HEK293T (cell line): ENCODE measurements at regions of chr15 and their contacts with region 1.

Region 1: DNA sequence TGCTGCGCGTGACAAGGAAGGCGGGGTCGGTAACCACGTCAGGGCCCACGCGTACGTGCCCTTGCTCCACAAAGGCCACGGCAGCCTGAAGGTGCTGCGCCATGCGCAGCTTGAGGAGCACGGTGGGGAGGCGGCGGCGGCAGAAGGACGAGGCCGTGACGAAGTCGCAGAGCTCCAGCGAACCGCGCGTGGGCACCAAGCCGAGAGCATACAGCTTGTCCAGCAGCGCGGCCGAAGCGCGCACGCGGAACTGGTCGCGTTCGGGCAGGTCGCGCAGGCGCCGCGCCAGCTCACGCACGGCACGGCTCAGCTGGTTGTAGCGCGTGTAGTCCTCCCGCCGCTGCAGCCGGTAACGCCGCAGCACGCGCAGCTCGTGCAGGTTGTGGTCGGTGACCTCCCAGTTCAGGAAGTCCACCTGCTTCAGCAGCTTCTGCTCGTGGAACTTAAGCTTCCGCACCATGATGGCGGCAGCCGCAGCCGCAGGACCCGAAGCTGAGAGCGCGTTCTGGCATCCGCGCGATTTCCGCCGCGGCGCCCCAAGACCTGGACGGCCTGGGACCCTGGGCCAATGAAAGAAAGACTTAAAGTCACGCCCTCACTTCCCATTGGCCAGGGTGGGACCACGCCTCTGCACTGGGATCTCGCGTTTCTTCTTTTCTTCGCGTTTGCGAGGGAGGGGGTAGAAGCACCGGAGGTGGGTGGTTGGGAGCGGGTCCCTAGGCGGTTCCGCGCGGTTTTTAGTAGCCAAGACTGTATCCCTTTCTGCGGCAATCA is at the start of gene IMP3:
- DNase-seq: peak; percentile 96

Region 2: DNA sequence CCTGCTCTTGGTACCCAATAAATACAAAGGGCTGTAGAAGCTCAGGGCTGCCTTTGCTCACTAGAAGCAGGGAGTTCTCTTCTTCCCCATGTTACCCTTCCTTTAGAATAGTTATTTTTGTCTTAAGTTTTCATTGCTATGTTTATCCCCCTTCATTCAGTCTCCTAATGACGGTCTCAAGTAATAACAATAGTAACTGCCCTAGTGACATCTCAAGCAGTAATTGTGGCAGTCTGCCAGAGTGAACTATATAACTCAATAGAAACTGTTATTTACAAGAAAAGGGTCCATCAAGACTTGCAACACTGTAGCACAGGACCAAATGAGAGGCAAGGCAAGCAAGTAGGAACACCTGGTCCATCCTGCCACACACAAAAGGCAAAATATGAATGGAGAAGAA is 155.9 kb before region 1 on chr15:
- CTCF ChIA-PET with region 1: no interaction called
- POLR2A ChIA-PET with region 1: no interaction called
- DNase-seq: no peak

Region 3: GRCh38 chr15:75578948-75579920 is 60.7 kb before region 1 on chr15 and contains the start of gene PTPN9:
- CTCF ChIA-PET with region 1: no interaction called
- POLR2A ChIA-PET with region 1: interaction called, 15 read pairs
- DNase-seq: peak; percentile 85

Region 4: GRCh38 chr15:75590239-75590638 is 49.7 kb before region 1 on chr15:
- CTCF ChIA-PET with region 1: no interaction called
- POLR2A ChIA-PET with region 1: no interaction called
- DNase-seq: no peak

Region 5: DNA sequence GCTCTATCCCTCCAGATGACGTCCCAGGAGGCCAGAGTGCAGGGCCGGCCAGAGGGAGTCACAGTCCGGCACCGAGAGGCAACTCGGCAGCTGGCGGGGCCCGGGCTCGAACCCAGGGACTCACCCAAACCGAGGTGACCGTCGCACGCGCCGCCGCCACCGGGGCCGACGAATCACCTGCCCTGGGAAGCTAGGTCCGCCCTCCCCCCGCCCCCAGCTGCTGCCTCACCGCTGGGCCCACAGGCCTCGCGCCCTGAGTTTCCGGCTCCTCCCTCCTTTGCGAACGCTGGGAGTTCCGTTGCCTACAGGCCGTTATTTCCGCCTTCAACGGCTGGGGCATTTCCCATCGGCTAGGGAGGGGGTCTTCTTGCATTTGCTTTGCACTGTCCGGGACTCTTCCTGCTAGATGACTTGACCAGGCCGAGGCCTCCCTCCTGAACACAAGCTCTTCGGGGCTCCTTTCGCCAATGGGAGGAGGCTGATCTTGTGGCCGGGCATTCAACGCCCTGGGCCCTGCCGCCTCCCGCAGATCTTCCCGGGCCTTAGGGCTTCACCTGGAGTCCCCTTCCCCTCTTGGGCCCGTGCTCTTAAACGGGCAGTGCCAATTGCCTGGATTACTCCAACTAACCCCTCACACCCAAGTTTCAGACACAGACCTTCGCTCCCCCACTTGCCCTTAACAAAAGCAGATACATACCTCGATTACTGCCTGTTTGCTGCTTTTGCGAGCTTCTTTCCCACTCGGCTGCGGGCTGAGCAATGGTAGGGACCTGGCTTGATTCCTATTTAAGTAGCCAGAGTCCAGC is 14.2 kb before region 1 on chr15 and contains the start of gene SNUPN:
- CTCF ChIA-PET with region 1: interaction called, 8 read pairs
- POLR2A ChIA-PET with region 1: interaction called, 93 read pairs
- DNase-seq: peak; percentile 98

Region 6: DNA sequence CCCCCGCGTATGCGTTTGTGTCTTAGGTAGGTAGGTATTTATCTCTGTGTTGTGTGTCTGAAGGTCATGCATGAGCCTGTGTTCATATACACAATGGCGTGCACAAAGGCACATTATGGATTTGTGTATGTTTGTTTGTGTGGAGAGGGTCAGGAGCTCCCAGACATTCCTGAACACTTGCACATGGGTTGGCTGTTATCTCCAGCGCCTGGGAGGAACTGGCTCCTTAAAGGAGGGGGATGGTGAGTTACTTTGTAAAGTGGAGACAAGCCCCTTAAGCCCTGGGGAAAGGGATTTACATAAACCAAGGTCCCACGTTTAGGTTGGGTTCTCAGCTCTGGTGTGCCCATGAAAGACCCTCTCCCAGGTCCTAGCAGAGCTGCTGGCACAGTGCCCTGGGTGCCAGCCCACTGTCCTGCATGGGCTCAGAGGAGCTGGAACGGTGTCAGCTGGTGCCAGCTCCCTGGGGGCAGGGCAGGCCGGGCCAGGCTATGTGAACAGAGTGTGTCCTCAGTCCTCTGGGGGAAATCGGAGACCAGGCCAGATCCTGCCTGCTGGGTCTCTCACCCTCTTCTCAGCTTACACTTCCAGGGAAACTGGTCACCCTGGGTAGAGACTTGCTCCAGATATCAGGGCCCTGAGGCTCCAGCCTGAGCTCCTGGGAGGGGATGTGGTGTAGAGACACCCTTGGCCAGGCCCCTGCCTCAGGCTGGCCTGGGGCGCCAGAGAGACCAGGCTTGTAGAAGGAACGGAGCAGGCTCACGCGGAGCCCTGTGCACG is 32.9 kb after region 1 on chr15:
- CTCF ChIA-PET with region 1: no interaction called
- POLR2A ChIA-PET with region 1: interaction called, 19 read pairs
- DNase-seq: no peak

Region 7: DNA sequence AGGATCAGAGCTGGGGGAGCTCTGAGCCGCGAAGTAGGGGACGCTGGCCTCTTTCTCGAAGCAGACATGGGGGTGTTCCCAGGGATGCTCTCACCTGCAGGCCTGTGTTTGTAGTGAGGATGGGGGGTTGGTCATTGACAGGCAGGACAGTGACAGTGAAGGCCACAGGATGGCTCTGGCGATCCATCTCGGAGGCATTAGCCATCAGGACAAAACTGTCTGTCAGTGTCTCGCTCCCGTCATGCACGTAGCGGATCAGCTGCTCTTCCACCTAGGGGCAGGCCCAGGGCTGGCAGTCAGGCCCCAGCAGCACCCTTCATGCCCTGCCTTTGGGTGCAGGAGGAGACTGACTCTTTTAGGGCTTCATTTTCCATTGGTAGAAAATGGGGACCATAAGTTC is 44.7 kb after region 1 on chr15:
- CTCF ChIA-PET with region 1: interaction called, 5 read pairs
- POLR2A ChIA-PET with region 1: interaction called, 14 read pairs
- DNase-seq: no peak

Region 8: DNA sequence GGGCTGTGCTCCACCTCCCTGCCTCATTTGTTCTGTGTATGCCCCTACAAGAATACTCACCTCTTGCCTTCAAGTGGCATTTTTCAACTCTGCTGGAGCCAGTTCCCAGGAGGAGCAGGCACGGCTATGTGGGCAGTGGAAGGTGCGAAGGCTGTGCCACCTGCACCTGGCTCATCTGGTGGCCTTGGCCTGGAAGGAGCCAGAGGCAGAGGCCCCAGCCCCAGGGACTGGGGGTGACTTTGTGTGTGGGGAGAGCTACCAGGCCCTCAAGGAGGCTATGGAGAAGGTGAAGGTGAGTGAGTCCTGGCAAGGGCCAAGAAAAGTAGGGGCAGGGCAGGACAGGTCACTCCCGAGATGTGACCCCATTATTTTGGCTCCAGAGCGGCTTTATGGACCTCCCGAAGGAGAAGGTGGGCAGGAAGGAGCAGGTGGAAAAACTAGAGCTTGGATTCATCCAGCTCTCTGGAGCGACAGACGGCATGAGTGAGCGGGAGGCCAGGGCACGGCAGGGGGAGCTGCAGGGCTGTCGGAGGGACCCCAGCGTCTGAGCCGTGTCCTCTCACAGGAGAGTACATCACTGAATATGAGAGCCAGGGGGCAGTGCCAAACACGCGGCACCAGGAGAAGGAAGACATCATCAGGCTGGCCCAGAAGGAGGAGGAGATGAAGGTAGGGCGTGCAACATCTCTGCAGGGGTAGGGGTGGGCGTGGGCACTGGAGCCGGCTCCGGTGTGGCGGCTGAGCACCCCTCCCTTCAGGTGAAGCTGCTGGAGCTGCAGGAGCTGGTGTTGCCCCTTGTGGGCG is 146.1 kb after region 1 on chr15:
- CTCF ChIA-PET with region 1: no interaction called
- POLR2A ChIA-PET with region 1: no interaction called
- DNase-seq: no peak